ENCODE measurements at regions of chr9 and their contacts with region 1.

Region 1: GRCh38 chr9:6681147-6681956 is 35.8 kb upstream of the GLDC start:
- DNase-seq: peak; percentile 97 to 98 (median 98)
- ATAC-seq: peak; percentile 96
- H3K4me3 ChIP-seq: peak overlapping the region; percentile 54
- H3K4me1 ChIP-seq: peaks cover 3% of the 10 kb centered on the region
- CTCF ChIP-seq: no peak

Region 2: GRCh38 chr9:6757456-6758247 is 76.3 kb after region 1 on chr9 and contains the start of gene KDM4C:
- intact Hi-C with region 1: loop called in 1 of 2 experiments (anchors 5 kb)
- DNase-seq: peak; percentile 96 to 97 (median 96)
- ATAC-seq: peak; percentile 91
- H3K4me3 ChIP-seq: peak within 1 kb of the TSS; percentile 94
- H3K4me1 ChIP-seq: peaks cover 5% of the 10 kb centered on the region
- CTCF ChIP-seq: no peak
- total RNA-seq, gene KDM4C: 44.6 to 74.9 (median 50.9) TPM

Region 3: GRCh38 chr9:6907772-6908381 is 226.5 kb after region 1 on chr9:
- intact Hi-C with region 1: no loop called
- DNase-seq: peak in 1 of 3 donors; percentile 33
- ATAC-seq: no peak
- H3K4me3 ChIP-seq: no peak overlapping the region
- H3K4me1 ChIP-seq: no peaks in the 10 kb centered on the region
- CTCF ChIP-seq: peak; percentile 17

Measured in mucosa of descending colon (tissue), 3 donors.